ENCODE measurements at regions of chr4 and their contacts with region 1.

Region 1: GRCh38 chr4:155403886-155404285 is 27.1 kb upstream of the MAP9 start:
- DNase-seq: peak; percentile 72
- ATAC-seq: peak; percentile 84
- H3K4me3 ChIP-seq: no peak overlapping the region
- H3K27ac ChIP-seq: no peak overlapping the region
- H3K4me1 ChIP-seq: no peaks in the 10 kb centered on the region; the same call in 1 of the 2 replicates
- H3K27me3 ChIP-seq: no peaks in the 10 kb centered on the region
- CTCF ChIP-seq: peak; percentile 72
- POLR2A ChIP-seq: no peak
- RAD21 ChIP-seq: peak; percentile 80

Region 2: GRCh38 chr4:155629183-155629825 is 225.4 kb after region 1 on chr4:
- CTCF ChIA-PET with region 1: no interaction called
- POLR2A ChIA-PET with region 1: no interaction called
- dilution Hi-C with region 1: no loop called
- in situ Hi-C with region 1: no loop called
- intact Hi-C with region 1: no loop called
- DNase-seq: peak; percentile 59
- ATAC-seq: peak; percentile 26
- H3K4me3 ChIP-seq: no peak overlapping the region
- H3K27ac ChIP-seq: peak overlapping the region; percentile 97; the same call in 1 of the 2 replicates
- H3K4me1 ChIP-seq: peaks cover 15% of the 10 kb centered on the region
- H3K27me3 ChIP-seq: no peaks in the 10 kb centered on the region
- CTCF ChIP-seq: no peak
- POLR2A ChIP-seq: no peak
- RAD21 ChIP-seq: no peak

Region 3: GRCh38 chr4:155794589-155795236 is 390.8 kb after region 1 on chr4:
- CTCF ChIA-PET with region 1: interaction called, 3 read pairs
- POLR2A ChIA-PET with region 1: no interaction called
- dilution Hi-C with region 1: no loop called
- in situ Hi-C with region 1: loop called (anchors 5 kb)
- intact Hi-C with region 1: no loop called
- DNase-seq: no peak
- ATAC-seq: no peak
- H3K4me3 ChIP-seq: no peak overlapping the region
- H3K27ac ChIP-seq: no peak overlapping the region
- H3K4me1 ChIP-seq: peaks cover 2% of the 10 kb centered on the region; the same call in 1 of the 2 replicates
- H3K27me3 ChIP-seq: no peaks in the 10 kb centered on the region
- CTCF ChIP-seq: no peak
- POLR2A ChIP-seq: no peak
- RAD21 ChIP-seq: no peak

Region 4: GRCh38 chr4:155809835-155810234 is 405.9 kb after region 1 on chr4:
- CTCF ChIA-PET with region 1: no interaction called
- POLR2A ChIA-PET with region 1: no interaction called
- dilution Hi-C with region 1: no loop called
- in situ Hi-C with region 1: no loop called
- intact Hi-C with region 1: loop called (anchors 2 kb)
- DNase-seq: peak; percentile 92
- ATAC-seq: peak; percentile 78
- H3K4me3 ChIP-seq: no peak overlapping the region
- H3K27ac ChIP-seq: no peak overlapping the region
- H3K4me1 ChIP-seq: peaks cover 5% of the 10 kb centered on the region
- H3K27me3 ChIP-seq: no peaks in the 10 kb centered on the region
- CTCF ChIP-seq: peak; percentile 76
- POLR2A ChIP-seq: no peak
- RAD21 ChIP-seq: peak; percentile 81

Region 5: GRCh38 chr4:156109949-156110900 is 706.3 kb after region 1 on chr4:
- CTCF ChIA-PET with region 1: no interaction called
- POLR2A ChIA-PET with region 1: no interaction called
- dilution Hi-C with region 1: no loop called
- in situ Hi-C with region 1: no loop called
- intact Hi-C with region 1: loop called (anchors 10 kb)
- DNase-seq: peak; percentile 8
- ATAC-seq: peak; percentile 17; the same call in 1 of the 2 replicates
- H3K4me3 ChIP-seq: no peak overlapping the region
- H3K27ac ChIP-seq: no peak overlapping the region
- H3K4me1 ChIP-seq: peaks cover 2% of the 10 kb centered on the region
- H3K27me3 ChIP-seq: no peaks in the 10 kb centered on the region
- CTCF ChIP-seq: no peak
- POLR2A ChIP-seq: no peak
- RAD21 ChIP-seq: no peak